ENCODE measurements at regions of chr1 and their contacts with region 1.

Region 1: GRCh38 chr1:109984456-109985275 is at the start of gene AHCYL1:
- DNase-seq: peak; percentile 100
- ATAC-seq: peak; percentile 97
- total RNA-seq, gene AHCYL1: 42.9 to 55.7 TPM

Region 2: GRCh38 chr1:109548321-109549267 is 436.1 kb before region 1 on chr1 and contains the start of gene GNAI3:
- intact Hi-C with region 1: loop called in 1 of 2 experiments (anchors 10 kb)
- DNase-seq: peak; percentile 97
- ATAC-seq: peak; percentile 98 to 99
- total RNA-seq, gene GNAI3: 3.4 to 4.6 TPM

Region 3: DNA sequence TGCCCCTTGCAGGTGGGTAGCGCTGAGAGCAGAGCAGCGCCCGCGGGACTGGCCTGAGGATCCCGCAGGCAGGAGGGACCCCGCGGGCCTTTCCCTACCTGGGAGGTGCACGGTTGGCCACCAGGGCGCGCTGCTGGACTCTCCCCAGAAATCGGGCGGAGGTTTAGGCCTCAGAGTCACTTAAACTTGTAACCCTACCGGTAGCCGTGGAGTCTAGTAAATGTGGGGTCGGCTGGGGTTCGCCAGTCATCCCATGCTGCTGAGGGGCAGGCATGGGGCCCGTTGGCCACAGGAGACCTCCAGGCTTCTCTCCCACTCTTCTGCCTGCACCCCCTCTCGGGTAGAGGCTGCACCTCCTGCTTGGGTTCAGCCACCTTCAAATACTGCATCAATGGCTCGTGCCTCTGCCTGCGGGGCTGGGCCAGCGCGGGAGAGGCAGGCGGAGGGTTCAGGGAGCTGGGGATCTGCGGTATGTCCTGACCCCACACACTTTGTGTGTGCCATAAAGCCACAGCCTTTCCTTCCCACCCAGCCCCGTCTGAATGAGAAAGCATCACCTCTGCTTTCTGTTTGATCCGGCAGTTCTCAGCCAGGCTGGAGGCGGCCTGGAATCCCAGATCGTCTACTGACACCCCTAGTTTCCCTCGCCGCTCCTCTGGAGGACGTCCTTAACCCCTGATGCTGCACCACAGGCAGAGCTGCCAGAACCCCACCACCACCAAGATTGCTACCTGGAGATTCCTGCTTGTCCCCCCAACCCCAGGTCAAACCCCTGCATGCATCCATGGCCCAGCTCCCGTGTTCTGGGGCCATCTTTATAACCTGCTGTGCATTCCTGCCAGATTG is 341.1 kb before region 1 on chr1:
- intact Hi-C with region 1: loop called (anchors 5 to 10 kb)
- DNase-seq: peak; percentile 84
- ATAC-seq: peak; percentile 89 to 92

Region 4: GRCh38 chr1:109773146-109773899 is 211.3 kb before region 1 on chr1:
- intact Hi-C with region 1: loop called (anchors 1 to 2 kb)
- DNase-seq: peak; percentile 85
- ATAC-seq: peak; percentile 85 to 88

Region 5: DNA sequence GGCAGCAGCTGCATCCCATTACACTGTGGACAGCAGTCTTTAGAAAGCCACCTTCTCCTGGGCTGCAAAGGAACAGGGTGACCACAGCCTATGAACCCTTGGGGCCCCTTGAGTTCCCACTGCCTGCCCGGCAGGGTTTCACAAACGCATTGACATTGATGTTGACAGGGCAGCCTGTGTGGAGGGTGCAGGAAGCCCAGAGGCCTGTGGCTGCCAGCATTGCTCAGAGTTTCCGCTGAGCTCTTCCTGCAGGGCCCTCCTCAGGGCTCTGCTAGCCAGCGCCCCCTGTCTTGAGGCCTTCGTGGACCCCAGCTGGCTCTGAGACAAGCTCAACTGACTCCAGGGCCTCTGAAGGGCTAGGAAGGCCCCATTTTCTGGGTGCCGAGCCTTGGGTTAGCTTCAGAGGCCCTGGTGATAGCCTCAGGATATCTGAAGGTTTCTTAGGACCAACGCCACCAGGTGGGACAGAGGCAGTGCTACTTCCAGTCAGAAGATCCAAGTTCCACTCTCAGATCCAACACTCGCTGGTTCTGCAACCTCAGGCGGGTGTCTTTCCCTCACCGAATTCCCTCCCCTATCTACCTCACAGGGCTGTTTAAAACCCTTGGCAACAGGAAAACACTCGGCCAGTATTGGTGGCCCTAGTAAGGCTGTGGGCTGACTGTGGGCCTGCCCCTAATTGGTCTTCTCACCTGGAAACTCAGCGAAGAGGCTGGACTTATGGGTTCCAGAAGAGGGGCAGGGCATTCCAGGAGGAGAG is 193.8 kb before region 1 on chr1:
- intact Hi-C with region 1: loop called in 1 of 2 experiments (anchors 5 kb)
- DNase-seq: peak; percentile 81
- ATAC-seq: peak; percentile 46 to 66

Region 6: DNA sequence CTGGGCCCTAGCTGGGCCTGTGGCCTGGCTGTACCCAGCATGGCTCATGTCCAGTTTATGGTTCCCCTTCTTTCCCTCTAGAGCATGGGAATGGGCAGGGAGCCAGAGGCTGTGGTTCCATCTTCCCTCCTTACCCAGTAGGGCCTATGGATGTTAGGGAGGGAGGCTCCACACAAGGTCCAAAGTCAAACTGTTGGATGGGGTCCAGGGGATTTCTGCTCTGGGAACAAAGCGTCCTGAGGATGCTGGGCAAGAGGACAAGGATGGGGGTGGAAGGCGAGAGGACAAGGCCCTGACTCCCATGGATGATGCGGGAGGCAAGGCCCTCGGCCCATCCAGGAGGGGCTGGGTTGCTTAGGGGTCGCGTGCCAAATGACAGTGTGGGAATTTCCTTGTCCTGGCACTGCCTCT is 56.8 kb before region 1 on chr1:
- intact Hi-C with region 1: loop called in 1 of 2 experiments (anchors 5 kb)
- DNase-seq: peak; percentile 85
- ATAC-seq: peak; percentile 53 to 61

Region 7: GRCh38 chr1:110068646-110069403 is 84.2 kb after region 1 on chr1:
- intact Hi-C with region 1: no loop called
- DNase-seq: no peak
- ATAC-seq: no peak

Region 8: GRCh38 chr1:110788673-110789072 is 804.0 kb after region 1 on chr1:
- intact Hi-C with region 1: no loop called
- DNase-seq: no peak
- ATAC-seq: no peak

Measured in left cardiac atrium (tissue), 4 donors.